Transverse colon (tissue), 4 donors: ENCODE measurements at regions of chr1 and their contacts with region 1.

Region 1: GRCh38 chr1:52002038-52002917 is 11.8 kb upstream of the RAB3B start:
- DNase-seq: peak; percentile 37
- H3K4me3 ChIP-seq: no peak overlapping the region
- H3K27ac ChIP-seq: no peak overlapping the region
- H3K4me1 ChIP-seq: peaks cover 0 to 13% (median 6%) of the 10 kb centered on the region in 4 donors
- H3K27me3 ChIP-seq: no peaks in the 10 kb centered on the region
- CTCF ChIP-seq: peak; percentile 87 to 92 (median 92)
- EP300 ChIP-seq: no peak
- POLR2A ChIP-seq: no peak

Region 2: DNA sequence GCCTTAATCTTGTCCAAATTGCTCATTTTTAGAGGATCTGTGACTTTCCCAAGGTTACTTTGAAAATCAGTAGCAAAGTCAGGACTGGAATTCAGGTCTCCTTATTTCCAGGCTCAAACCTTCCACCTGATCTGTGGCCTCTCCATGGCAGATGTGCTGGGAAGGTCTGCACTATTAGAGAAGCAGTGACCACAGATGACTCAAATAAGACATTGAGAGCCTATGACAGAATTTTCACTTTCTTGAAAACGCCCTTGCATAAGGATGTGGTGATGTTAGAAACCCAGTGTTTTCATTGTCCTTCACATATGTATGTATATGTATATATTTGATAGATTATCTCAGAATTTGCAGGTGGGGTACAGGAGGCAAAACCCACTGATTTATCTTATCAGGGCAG is 717.2 kb before region 1 on chr1:
- in situ Hi-C with region 1: no loop called
- intact Hi-C with region 1: loop called (anchors 5 kb)
- DNase-seq: no peak
- H3K4me3 ChIP-seq: no peak overlapping the region
- H3K27ac ChIP-seq: no peak overlapping the region
- H3K4me1 ChIP-seq: peaks cover 0 to 7% (median 0%) of the 10 kb centered on the region in 4 donors
- H3K27me3 ChIP-seq: no peaks in the 10 kb centered on the region
- CTCF ChIP-seq: no peak
- EP300 ChIP-seq: no peak
- POLR2A ChIP-seq: no peak

Region 3: GRCh38 chr1:51740652-51741051 is 261.6 kb before region 1 on chr1:
- in situ Hi-C with region 1: no loop called
- intact Hi-C with region 1: no loop called
- DNase-seq: no peak
- H3K4me3 ChIP-seq: no peak overlapping the region
- H3K27ac ChIP-seq: no peak overlapping the region
- H3K4me1 ChIP-seq: peaks cover 0 to 17% (median 13%) of the 10 kb centered on the region in 4 donors
- H3K27me3 ChIP-seq: no peaks in the 10 kb centered on the region
- CTCF ChIP-seq: no peak
- EP300 ChIP-seq: no peak
- POLR2A ChIP-seq: no peak

Region 4: GRCh38 chr1:51897699-51898031 is 104.6 kb before region 1 on chr1:
- in situ Hi-C with region 1: loop called in 3 of 4 experiments (anchors 10 kb)
- intact Hi-C with region 1: loop called (anchors 5 kb)
- DNase-seq: no peak
- H3K4me3 ChIP-seq: no peak overlapping the region
- H3K27ac ChIP-seq: no peak overlapping the region
- H3K4me1 ChIP-seq: no peaks in the 10 kb centered on the region
- H3K27me3 ChIP-seq: peaks cover 47% of the 10 kb centered on the region
- CTCF ChIP-seq: no peak
- EP300 ChIP-seq: no peak
- POLR2A ChIP-seq: no peak

Region 5: GRCh38 chr1:51906306-51907078 is 95.8 kb before region 1 on chr1:
- in situ Hi-C with region 1: loop called in 3 of 4 experiments (anchors 10 kb)
- intact Hi-C with region 1: no loop called
- DNase-seq: no peak
- H3K4me3 ChIP-seq: no peak overlapping the region
- H3K27ac ChIP-seq: no peak overlapping the region
- H3K4me1 ChIP-seq: no peaks in the 10 kb centered on the region
- H3K27me3 ChIP-seq: peaks cover 9% of the 10 kb centered on the region
- CTCF ChIP-seq: no peak
- EP300 ChIP-seq: no peak
- POLR2A ChIP-seq: no peak